ENCODE measurements at regions of chr4 and their contacts with region 1.

Region 1: DNA sequence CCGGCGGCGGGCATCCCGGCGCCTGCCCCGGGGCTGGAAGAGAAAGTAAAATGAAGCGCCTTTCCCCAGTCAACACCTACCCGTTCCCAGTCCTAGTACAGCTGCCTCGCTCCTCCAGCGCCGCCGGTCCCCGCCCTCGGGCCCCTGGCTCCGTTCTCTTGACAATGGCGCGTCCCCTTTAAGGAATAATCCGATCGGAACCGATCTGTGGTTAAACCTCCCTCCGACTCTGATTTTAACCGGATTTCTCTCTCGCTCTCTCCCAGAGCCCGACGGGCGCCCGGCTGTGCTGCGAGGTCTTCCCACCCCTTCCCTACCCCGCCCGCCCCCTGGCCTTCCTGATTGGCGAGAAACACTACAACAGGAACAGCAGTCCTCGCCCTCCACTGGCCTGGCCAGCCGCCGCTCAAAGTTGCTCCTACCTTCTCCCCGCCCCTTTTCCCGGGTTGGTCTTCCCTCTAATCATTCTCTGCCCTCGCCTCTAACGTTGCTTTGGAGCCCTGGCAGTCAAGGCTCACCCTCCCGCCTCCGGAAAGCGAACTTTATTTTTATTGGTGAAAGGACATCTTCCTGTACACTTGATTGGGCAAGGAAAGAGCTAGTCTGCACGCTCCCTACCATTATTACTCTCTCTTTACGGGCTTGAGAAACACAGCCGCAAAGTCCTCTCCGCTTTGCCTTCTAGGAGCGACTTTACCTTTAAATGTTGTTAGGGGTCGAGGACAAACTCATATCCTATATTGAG is at the start of gene FRYL:
- DNase-seq: peak; percentile 99 to 100
- ATAC-seq: peak; percentile 94 to 98 (median 96)
- H3K4me3 ChIP-seq: peak within 1 kb of the TSS; percentile 65 to 98 (median 96)
- H3K27ac ChIP-seq: peak within 1 kb of the TSS; percentile 87 to 99 (median 98)
- H3K4me1 ChIP-seq: peaks cover under 1 to 44% (median 32%) of the 10 kb centered on the region in 9 donors
- H3K27me3 ChIP-seq: no peaks in the 10 kb centered on the region
- CTCF ChIP-seq: no peak
- total RNA-seq, gene FRYL: 30.0 to 60.1 (median 37.7) TPM

Region 2: DNA sequence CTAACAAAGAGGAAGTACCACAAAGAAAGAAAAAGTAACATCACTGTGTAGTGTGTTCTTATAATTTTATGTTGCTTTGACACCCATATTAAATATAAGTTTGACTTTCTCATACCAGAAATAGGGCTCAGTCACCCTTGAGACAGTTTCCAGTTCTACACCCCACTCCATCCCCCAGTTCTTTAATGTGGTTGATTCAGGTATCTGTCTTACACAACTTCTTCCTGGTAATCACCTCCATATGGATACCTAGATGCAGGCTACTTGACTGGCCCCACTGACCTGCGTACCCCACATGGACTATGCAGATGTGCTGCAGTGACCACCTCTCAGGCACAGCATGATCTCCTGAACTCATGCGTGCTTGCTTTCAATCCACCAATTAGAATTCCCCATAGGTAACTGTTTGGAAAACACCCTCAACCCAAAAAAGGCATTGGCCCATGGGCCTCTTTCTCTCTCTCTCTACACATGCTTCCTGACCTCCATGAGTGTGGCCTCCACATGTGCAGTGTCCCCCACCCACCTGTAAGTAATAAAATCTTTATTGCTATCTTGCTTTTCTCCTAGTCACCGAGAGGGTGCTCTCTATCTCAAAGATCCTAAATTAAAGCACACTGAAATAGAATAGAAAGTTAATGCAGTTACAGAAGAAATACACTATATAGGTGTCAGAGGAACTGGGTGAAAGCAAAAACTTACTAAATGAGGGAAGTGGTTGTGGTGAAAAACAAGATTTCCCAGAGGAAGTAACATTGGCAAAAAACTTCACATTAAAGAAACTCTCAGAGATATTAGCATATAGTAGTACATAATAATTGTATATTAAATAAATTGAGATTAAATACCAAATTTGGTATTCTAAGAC is 191.7 kb before region 1 on chr4:
- intact Hi-C with region 1: loop called in 4 of 10 experiments (anchors 10 kb)
- DNase-seq: no peak
- ATAC-seq: peak in 1 of 8 donors; percentile 10
- H3K4me3 ChIP-seq: no peak overlapping the region
- H3K27ac ChIP-seq: peak overlapping the region in 2 of 10 donors; percentile 16 to 50
- H3K4me1 ChIP-seq: peaks cover 0 to 42% (median 17%) of the 10 kb centered on the region in 9 donors
- H3K27me3 ChIP-seq: no peaks in the 10 kb centered on the region
- CTCF ChIP-seq: no peak

Region 3: DNA sequence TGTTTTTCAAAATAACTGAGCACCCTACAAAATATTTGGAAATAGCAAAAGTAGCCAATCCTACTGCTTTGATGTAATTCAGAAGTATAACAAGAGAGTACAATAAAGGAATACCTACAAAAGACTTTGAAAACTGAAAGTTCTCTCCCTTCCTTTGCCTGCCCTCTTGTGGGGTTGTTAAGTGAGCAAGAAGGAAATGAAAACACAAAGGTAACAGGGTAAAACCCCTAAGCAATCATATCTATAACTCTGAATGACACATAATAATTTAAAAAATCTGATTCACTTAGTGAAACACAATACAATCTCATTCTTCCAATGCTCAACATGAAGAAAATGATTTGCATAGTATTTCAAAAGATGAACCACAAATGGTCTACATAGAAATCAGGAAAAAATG is 98.3 kb before region 1 on chr4:
- intact Hi-C with region 1: loop called in 1 of 10 experiments (anchors 10 kb)
- DNase-seq: no peak
- ATAC-seq: peak in 4 of 8 donors; percentile 44 to 70 (median 58)
- H3K4me3 ChIP-seq: no peak overlapping the region
- H3K27ac ChIP-seq: peak overlapping the region in 1 of 10 donors; percentile 19
- H3K4me1 ChIP-seq: peaks cover 0 to 45% (median 17%) of the 10 kb centered on the region in 9 donors
- H3K27me3 ChIP-seq: no peaks in the 10 kb centered on the region
- CTCF ChIP-seq: peak; percentile 25 to 74 (median 47)

Region 4: DNA sequence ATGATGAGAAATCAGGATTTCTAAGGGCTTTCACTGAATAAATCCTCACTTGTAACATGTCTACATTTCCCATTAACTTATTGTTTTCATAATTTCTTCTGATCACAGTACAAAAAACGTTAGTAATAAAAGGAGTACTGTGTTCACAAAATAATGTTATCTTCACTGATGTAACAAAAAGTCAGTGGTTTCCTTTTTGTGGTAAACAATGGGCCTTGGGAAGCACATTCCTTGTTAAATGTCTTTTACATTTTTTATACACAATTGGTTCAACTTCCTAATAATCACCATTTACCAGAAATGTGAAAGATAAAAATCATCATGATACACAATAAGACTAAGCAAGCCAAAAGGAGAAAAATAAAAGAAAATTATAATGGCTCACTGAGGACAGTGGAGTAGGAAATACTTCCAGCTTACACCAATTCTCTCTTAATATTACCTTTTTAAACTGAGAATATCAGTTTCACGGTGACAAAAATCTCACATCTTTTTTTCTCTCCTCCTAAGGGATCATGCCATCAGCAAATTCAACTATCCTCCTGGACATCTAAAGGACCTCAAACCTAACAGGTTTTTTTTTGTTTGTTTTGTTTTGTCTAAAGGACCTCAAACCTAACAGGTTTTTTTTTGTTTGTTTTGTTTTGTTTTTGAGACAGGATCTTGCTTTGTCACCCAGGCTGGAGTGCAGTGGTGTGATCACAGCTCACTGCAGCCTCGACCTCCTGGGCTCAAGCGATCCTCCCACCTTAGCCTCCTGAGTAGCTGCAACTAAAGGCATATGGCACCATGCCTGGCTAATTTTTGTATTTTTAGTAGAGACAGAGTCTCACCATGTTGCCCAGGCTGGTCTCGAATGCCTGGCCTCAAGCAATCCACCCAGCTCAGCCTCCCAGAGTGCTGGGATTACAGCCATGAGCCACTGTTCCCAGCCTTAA is 57.4 kb before region 1 on chr4:
- intact Hi-C with region 1: loop called in 1 of 10 experiments (anchors 10 kb)
- DNase-seq: no peak
- ATAC-seq: peak in 6 of 8 donors; percentile 35 to 66 (median 52)
- H3K4me3 ChIP-seq: no peak overlapping the region
- H3K27ac ChIP-seq: peak overlapping the region in 9 of 10 donors; percentile 1 to 80 (median 55)
- H3K4me1 ChIP-seq: peaks cover 0 to 78% (median 45%) of the 10 kb centered on the region in 9 donors
- H3K27me3 ChIP-seq: no peaks in the 10 kb centered on the region
- CTCF ChIP-seq: no peak

Region 5: GRCh38 chr4:48830706-48831531 is 50.7 kb after region 1 on chr4 and contains the start of gene OCIAD1:
- intact Hi-C with region 1: loop called in 8 of 10 experiments (anchors 1 to 10 kb)
- DNase-seq: peak; percentile 92 to 98
- ATAC-seq: peak; percentile 100
- H3K4me3 ChIP-seq: peak within 1 kb of the TSS; percentile 66 to 95 (median 80)
- H3K27ac ChIP-seq: peak within 1 kb of the TSS; percentile 85 to 98 (median 94)
- H3K4me1 ChIP-seq: peaks cover 4 to 24% (median 19%) of the 10 kb centered on the region in 9 donors
- H3K27me3 ChIP-seq: peaks cover 0 to 4% (median 0%) of the 10 kb centered on the region in 7 donors
- CTCF ChIP-seq: no peak
- total RNA-seq, gene OCIAD1: 131 to 183 (median 161) TPM

Region 6: DNA sequence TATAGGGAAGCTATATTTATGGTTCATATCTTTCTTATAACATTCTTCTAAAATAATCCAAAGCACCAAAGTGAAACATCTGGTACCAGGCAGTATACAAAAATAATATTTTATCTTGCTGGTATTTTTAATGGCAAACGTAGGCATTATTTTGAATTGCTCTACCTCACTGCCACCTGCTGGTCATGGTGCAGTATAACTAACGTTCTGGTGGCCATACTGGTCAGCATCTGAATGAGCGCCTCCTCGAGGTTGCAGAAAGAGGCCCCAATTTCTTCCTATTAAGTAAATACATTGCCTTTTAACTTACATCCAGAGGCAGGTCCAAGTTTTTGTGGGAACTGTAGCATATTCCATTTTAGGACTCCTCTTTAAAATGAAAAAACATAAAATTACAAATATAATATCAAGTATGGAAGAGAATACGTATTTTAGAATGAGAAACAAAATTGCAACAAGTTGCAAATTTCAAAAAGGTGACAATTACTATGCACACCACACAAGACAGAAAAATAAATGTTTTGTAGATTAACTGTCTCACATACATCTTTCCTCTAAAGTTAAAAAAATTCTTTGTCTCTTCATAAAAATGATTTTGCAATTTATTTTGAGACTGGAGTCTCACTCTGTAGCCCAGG is 183.0 kb after region 1 on chr4:
- intact Hi-C with region 1: loop called in 1 of 10 experiments (anchors 10 kb)
- DNase-seq: peak; percentile 22 to 80
- ATAC-seq: peak; percentile 62 to 88 (median 80)
- H3K4me3 ChIP-seq: no peak overlapping the region
- H3K27ac ChIP-seq: no peak overlapping the region
- H3K4me1 ChIP-seq: no peaks in the 10 kb centered on the region
- H3K27me3 ChIP-seq: no peaks in the 10 kb centered on the region
- CTCF ChIP-seq: peak; percentile 88 to 99 (median 96)